ENCODE measurements at regions of chrX and their contacts with region 1.

Region 1: DNA sequence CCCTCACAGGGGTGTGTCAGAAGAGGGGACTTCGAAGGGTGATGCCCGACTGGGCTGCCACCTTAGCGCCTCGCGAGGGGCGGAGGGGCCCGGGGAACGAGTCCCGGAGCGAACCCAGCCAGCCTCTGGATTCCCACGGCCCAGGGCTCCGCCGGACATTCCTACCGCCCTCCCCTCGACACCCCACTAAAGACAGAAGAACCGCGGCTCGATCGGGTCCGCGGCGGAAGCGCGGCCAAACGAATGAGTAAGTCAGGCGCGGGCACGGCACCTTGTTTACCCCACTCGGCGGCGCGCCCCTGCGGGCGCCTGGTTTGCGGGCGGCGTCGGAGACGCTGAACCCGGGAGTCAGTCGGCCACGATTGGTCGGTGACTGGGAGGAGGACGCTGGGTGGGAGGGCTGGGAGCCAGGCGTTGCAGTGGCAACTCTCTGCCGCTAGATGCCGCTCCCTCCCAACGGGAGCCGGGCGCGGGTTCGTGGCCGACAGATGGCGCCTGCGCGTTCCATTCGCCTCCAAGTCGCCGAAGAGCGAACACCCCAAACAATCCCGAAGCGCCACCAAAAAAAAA is 1.4 kb upstream of the STAG2 start:
- DNase-seq: peak; percentile 87 to 92
- ATAC-seq: peak; percentile 75 to 85
- H3K4me3 ChIP-seq: peak overlapping the region; percentile 94
- H3K27ac ChIP-seq: peak overlapping the region; percentile 100
- H3K4me1 ChIP-seq: peaks cover 20% of the 10 kb centered on the region
- CTCF ChIP-seq: peak; percentile 94
- EP300 ChIP-seq: no peak
- POLR2A ChIP-seq: peak; percentile 37; the same call in 1 of the 2 replicates
- RAD21 ChIP-seq: peak; percentile 78 to 91

Region 2: GRCh38 chrX:123878252-123878721 is 81.8 kb before region 1 on chrX:
- CTCF ChIA-PET with region 1: no interaction called
- POLR2A ChIA-PET with region 1: no interaction called
- DNase-seq: no peak
- ATAC-seq: no peak
- H3K4me3 ChIP-seq: no peak overlapping the region
- H3K27ac ChIP-seq: no peak overlapping the region
- H3K4me1 ChIP-seq: peaks cover 28% of the 10 kb centered on the region
- CTCF ChIP-seq: no peak
- EP300 ChIP-seq: no peak
- POLR2A ChIP-seq: no peak
- RAD21 ChIP-seq: no peak

Region 3: DNA sequence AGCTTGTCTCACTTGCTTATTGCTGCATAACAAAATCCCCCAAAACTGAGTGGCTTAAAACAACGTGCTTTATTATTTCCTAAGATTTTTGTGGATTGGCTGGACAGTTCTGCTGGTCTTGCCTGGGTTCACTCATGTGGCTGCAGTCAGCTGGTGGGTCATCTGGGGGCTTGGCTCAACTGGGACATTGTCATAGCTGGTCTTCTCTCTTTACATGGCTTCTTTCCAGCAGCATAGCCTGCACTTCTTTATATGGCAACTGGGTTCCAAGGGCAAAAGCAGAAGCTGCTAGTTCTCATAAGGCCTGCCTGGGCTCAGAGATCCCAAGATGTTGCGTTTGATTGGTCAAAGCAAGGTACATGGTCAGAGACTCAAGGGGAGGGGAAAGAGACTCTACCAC is 32.3 kb before region 1 on chrX:
- CTCF ChIA-PET with region 1: no interaction called
- POLR2A ChIA-PET with region 1: no interaction called
- DNase-seq: no peak
- ATAC-seq: no peak
- H3K4me3 ChIP-seq: no peak overlapping the region
- H3K27ac ChIP-seq: no peak overlapping the region
- H3K4me1 ChIP-seq: no peaks in the 10 kb centered on the region
- CTCF ChIP-seq: no peak
- EP300 ChIP-seq: no peak
- POLR2A ChIP-seq: no peak
- RAD21 ChIP-seq: no peak

Region 4: GRCh38 chrX:123976706-123977316 is 16.7 kb after region 1 on chrX:
- CTCF ChIA-PET with region 1: interaction called, 31 read pairs
- POLR2A ChIA-PET with region 1: interaction called, 4 read pairs
- DNase-seq: peak; percentile 41 to 64
- ATAC-seq: peak; percentile 83 to 88
- H3K4me3 ChIP-seq: no peak overlapping the region
- H3K27ac ChIP-seq: no peak overlapping the region
- H3K4me1 ChIP-seq: peaks cover 56% of the 10 kb centered on the region
- CTCF ChIP-seq: peak; percentile 59
- EP300 ChIP-seq: no peak
- POLR2A ChIP-seq: no peak
- RAD21 ChIP-seq: peak; percentile 75 to 82

Region 5: GRCh38 chrX:123990602-123991001 is 30.5 kb after region 1 on chrX:
- CTCF ChIA-PET with region 1: no interaction called
- POLR2A ChIA-PET with region 1: no interaction called
- DNase-seq: no peak
- ATAC-seq: no peak; a peak in 1 of 6 replicates
- H3K4me3 ChIP-seq: no peak overlapping the region
- H3K27ac ChIP-seq: no peak overlapping the region
- H3K4me1 ChIP-seq: peaks cover 20% of the 10 kb centered on the region; the same call in 1 of the 3 replicates
- CTCF ChIP-seq: no peak
- EP300 ChIP-seq: no peak
- POLR2A ChIP-seq: no peak
- RAD21 ChIP-seq: no peak

Region 6: DNA sequence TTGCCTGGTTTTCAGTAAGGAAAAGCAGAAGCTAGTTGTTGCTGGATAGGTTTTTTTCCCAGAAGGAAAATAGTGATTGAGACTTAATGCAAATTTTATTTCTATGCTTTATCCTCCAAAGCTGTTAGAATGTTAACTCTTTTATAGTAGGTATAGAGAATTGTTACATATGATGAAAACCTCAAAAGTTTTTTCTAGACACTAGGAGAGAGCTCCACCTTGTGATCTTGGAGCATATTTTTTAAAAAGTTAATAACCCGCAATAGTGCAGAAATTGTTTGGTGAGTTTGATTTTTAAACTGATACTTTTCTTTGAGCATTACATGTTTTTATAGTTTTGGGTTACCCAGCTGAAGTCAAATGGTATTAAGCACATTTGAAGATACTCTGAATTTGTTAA is 57.9 kb after region 1 on chrX:
- CTCF ChIA-PET with region 1: interaction called, 11 read pairs
- POLR2A ChIA-PET with region 1: no interaction called
- DNase-seq: no peak
- ATAC-seq: no peak
- H3K4me3 ChIP-seq: no peak overlapping the region
- H3K27ac ChIP-seq: no peak overlapping the region
- H3K4me1 ChIP-seq: peaks cover 14% of the 10 kb centered on the region; the same call in 2 of the 3 replicates
- CTCF ChIP-seq: peak; percentile 25
- EP300 ChIP-seq: no peak
- POLR2A ChIP-seq: no peak
- RAD21 ChIP-seq: peak; percentile 15 to 37; a peak in 1 of 5 replicates